ENCODE measurements at regions of chrX and their contacts with region 1.

Region 1: DNA sequence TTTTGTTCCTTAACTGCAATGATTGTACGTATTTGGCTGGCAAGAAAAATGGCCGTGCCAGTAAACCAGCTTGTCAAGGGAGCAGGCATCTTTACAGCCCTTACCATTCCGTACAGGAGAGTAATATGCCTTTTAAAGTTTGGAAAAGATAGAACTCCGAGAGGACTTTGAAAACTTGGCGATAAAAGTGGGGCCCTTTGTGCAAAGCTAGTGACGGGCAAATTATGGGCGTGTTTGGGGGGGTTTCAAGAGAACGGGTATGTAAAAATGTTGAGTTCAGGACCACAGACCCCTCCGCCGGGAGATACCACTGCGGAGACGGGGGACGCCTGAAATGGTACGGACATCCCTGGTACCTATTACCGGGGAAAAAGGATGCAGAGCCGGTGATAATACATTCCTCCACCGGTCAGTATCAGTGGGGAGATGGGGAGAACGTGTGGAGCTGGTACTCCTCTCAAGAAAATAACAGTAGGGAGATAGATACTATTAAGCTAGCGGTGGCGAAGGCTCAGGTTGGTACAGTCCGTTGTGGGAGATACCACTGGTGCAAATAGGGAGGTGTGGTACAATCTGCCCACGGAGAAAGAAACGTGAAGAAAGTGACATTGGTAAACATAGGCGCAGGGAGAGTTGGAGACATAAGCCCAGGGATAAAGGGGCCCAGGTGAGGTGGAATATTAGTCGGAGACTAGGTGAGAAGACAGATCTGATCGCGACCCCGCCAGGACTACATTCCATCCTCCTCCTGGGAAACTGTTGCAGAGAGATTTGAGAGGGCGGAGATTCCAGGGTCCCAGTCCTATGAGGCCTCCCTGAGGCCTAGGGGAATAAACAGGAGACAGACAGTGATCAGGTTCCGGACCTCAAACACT is 14.5 kb downstream of the SPACA5 start:
- DNase-seq: peak; percentile 81
- H3K4me3 ChIP-seq: peak overlapping the region; percentile 31 to 52 (median 40)
- H3K27ac ChIP-seq: peak overlapping the region; percentile 72 to 86 (median 82)
- H3K4me1 ChIP-seq: peaks cover 0 to 3% (median 0%) of the 10 kb centered on the region in 4 donors
- H3K27me3 ChIP-seq: no peaks in the 10 kb centered on the region
- CTCF ChIP-seq: no peak
- EP300 ChIP-seq: no peak
- POLR2A ChIP-seq: no peak

Region 2: DNA sequence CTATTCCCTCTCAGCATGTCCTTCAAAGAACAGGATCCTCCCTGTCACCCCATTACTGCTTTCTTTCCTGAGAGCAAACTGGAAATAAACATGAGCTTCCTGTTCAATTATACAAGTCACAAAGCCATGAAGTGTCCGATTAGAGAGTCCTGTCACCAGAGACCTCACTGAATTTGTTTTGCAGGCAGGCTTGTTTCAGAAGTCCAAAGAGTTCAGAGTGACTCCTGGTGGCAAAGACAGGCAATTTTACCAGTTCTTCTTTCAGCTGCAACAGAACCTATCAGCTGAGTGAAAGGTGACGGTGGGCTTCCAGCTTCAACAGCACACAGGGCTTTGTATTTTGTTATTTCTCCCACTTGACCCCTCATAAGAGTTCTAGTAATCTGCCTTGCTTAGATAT is 377.3 kb before region 1 on chrX:
- in situ Hi-C with region 1: no loop called
- intact Hi-C with region 1: no loop called
- DNase-seq: no peak
- H3K4me3 ChIP-seq: no peak overlapping the region
- H3K27ac ChIP-seq: no peak overlapping the region
- H3K4me1 ChIP-seq: peaks cover 0 to 6% (median 2%) of the 10 kb centered on the region in 4 donors
- H3K27me3 ChIP-seq: no peaks in the 10 kb centered on the region
- CTCF ChIP-seq: peak in 3 of 5 experiments; percentile 8 to 23 (median 13)
- EP300 ChIP-seq: no peak
- POLR2A ChIP-seq: no peak

Region 3: GRCh38 chrX:47836164-47837072 is 184.8 kb before region 1 on chrX and contains the start of gene ZNF81:
- in situ Hi-C with region 1: loop called in 2 of 4 experiments (anchors 10 to 25 kb)
- intact Hi-C with region 1: no loop called
- DNase-seq: peak; percentile 96
- H3K4me3 ChIP-seq: peak within 1 kb of the TSS; percentile 28 to 61 (median 48)
- H3K27ac ChIP-seq: peak within 1 kb of the TSS; percentile 62 to 85 (median 77)
- H3K4me1 ChIP-seq: peaks cover 0 to 12% (median 0%) of the 10 kb centered on the region in 4 donors
- H3K27me3 ChIP-seq: no peaks in the 10 kb centered on the region
- CTCF ChIP-seq: no peak
- EP300 ChIP-seq: no peak
- POLR2A ChIP-seq: peak; percentile 54
- total RNA-seq, gene ZNF81: 7.8 to 11.6 (median 8.7) TPM

Region 4: DNA sequence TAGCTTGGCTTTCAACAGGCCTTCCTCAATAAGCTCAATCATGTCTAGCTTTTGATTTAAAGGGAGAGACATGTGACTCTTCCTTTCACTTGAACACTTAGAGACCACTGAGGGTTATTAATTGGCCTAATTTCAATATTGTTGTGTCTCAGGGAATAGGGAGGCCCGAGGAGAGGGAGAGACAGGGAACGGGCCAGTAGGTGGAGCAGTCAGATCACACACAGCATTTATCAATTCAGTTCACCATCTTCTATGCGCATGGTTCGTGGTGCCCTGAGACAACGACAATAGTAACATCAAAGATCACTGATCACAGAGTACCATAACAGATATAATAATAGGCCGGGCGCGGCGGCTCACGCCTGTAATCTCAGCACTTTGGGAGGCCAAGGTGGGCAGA is 166.8 kb before region 1 on chrX:
- in situ Hi-C with region 1: loop called in 3 of 4 experiments (anchors 10 to 25 kb)
- intact Hi-C with region 1: no loop called
- DNase-seq: peak; percentile 36
- H3K4me3 ChIP-seq: no peak overlapping the region
- H3K27ac ChIP-seq: no peak overlapping the region
- H3K4me1 ChIP-seq: no peaks in the 10 kb centered on the region
- H3K27me3 ChIP-seq: no peaks in the 10 kb centered on the region
- CTCF ChIP-seq: peak; percentile 20 to 58 (median 40)
- EP300 ChIP-seq: no peak
- POLR2A ChIP-seq: no peak

Region 5: DNA sequence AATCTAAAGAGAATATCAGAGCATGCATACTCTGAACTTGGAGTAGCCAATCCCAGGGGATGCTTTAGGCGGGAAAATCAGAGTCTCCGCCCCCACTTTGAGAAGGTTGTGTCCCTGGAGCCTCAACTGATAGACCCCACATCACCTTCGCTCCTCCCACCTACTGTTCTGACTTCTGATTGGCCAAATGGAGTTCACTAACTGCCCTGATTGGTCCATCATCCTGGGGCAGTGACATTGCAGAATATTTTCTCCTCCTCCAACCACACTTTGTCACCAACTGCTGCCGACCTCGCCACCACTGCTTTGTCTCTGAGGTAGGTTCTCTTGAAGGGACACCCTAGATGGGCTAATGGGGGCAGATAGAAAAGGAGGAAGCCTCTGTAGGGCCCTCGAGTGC is 86.5 kb after region 1 on chrX:
- in situ Hi-C with region 1: no loop called
- intact Hi-C with region 1: no loop called
- DNase-seq: no peak
- H3K4me3 ChIP-seq: no peak overlapping the region
- H3K27ac ChIP-seq: no peak overlapping the region
- H3K4me1 ChIP-seq: no peaks in the 10 kb centered on the region
- H3K27me3 ChIP-seq: no peaks in the 10 kb centered on the region
- CTCF ChIP-seq: no peak
- EP300 ChIP-seq: no peak
- POLR2A ChIP-seq: no peak

Measured in transverse colon (tissue), 4 donors.